ENCODE measurements at regions of chr17 and their contacts with region 1.

Region 1: GRCh38 chr17:28849281-28849680 is 5.5 kb upstream of the ERAL1 start:
- DNase-seq: no peak
- ATAC-seq: no peak
- H3K4me3 ChIP-seq: no peak overlapping the region
- H3K27ac ChIP-seq: no peak overlapping the region
- H3K4me1 ChIP-seq: peaks cover 0 to 6% of the 10 kb centered on the region in 2 donors
- H3K27me3 ChIP-seq: no peaks in the 10 kb centered on the region
- CTCF ChIP-seq: no peak

Region 2: DNA sequence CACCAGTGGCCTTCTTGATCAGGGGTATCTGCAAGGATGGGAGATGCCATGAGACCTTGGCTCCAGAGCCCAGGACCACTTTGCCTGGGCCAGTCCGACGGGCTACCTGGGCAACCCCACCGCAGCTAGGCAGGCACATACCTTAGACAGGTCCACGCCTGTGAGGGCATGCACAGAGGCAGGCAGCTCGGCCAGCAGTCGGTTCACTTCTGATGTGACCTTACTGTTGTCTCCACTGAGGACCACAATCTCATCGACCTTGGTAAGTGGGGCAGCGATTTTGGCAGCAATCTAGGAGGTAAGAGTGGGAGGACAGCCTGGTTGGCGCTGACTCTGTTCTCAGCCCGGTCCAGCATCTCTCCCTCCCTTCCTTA is 31.3 kb after region 1 on chr17:
- intact Hi-C with region 1: loop called in 1 of 2 experiments (anchors 5 kb)
- DNase-seq: peak in 1 of 4 donors; percentile 52
- ATAC-seq: no peak
- H3K4me3 ChIP-seq: no peak overlapping the region
- H3K27ac ChIP-seq: no peak overlapping the region
- H3K4me1 ChIP-seq: no peaks in the 10 kb centered on the region
- H3K27me3 ChIP-seq: no peaks in the 10 kb centered on the region
- CTCF ChIP-seq: no peak

Measured in left lung (tissue), 14 donors.